Right ventricle myocardium superior (tissue), 1 donor: ENCODE measurements at regions of chr1 and their contacts with region 1.

Region 1: GRCh38 chr1:67149179-67149770 is 14.5 kb upstream of the C1orf141 start:
- DNase-seq: no peak
- ATAC-seq: peak; percentile 99

Region 2: DNA sequence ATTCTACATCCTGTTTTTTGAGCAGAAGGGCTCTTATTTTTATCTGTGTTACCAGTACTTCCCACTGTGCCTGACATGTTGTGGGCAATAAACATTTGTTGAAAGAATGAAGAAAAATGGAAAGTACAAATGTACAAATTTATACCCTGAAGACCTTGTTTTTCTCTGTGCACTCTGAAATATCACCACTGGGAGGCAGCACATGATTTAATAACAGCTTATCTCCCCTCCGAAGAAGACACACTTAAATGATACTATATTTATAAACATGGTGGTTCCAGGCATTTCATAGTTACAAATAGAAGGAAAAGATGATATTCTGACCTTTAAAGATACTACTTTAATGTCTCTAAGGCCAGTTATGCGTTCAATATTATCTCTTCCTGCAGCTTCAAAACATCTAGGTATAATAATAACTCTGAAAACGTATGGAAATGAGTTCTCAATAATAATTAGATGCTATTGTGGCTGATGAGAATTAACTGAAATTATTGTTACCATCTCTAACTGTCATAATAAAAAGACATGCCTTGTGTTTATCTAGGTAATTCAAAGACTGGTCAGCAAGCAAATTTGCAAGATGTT is 384.2 kb before region 1 on chr1:
- intact Hi-C with region 1: loop called (anchors 5 kb)
- DNase-seq: no peak
- ATAC-seq: peak; percentile 68

Region 3: GRCh38 chr1:66968574-66968973 is 180.7 kb before region 1 on chr1:
- intact Hi-C with region 1: no loop called
- DNase-seq: no peak
- ATAC-seq: no peak

Region 4: DNA sequence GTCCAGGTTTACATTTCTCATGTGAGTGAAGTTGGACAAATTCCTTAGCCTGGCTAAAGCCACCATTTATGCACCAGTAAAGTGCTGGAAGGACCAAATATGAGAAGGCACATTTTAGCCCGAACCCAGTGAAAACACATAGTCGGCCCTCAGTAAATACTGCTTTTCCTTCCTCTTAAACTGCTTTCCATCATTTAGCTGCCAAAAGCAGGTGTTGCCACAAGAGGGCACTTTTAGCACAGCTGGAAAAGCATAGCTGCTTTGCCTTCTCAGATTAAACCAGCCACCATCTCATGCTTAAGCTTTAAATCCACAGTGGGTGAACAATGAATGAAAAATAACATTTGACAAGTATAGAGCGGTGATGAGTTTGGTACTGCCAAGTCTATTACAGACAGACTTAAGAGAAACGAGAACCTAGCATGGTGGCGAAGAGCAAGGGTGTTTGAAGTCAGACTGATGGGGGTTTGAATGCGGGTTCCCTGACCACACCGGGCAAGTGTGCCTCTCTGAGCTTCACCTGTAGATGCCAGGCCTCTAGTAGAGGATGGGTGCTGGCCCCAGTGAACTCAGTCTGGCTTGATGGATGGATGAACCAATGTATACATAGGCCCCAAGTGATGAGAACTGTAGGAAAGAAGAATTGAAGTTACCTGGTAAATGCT is 153.1 kb before region 1 on chr1:
- intact Hi-C with region 1: loop called (anchors 2 kb)
- DNase-seq: no peak
- ATAC-seq: peak; percentile 72